ENCODE measurements at regions of chr20 and their contacts with region 1.

Region 1: DNA sequence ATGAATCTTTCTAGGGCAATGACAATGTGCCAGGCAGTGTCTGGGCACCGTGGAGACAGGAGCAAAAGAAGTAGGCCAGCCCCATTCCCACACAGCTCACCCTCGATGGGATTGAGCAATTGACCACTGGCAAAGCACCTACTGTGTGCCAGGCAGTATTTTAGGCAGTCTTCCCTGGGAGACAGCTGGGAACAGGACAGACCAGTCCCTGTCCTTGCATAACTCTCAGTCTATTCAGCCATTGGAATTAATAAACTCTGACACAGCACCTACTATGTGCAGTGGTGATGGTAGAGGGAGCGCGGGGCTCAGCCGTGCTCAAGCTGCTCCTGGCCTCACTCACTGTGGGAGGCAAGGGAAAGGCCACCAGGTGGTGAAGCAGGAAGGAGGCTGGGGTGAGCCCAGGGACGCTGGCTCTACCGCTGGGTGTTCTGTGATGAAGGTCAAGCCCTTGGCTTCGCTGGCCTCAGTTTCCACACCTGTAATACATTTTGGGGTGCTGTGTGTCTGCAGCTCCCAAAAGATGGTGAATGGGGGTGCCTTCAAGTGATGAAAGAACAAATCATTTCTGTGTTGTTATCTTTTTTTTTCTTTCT is 122.3 kb upstream of the PMEPA1 start:
- DNase-seq: no peak
- ATAC-seq: no peak
- H3K4me3 ChIP-seq: no peak overlapping the region
- H3K27ac ChIP-seq: no peak overlapping the region
- H3K4me1 ChIP-seq: no peaks in the 10 kb centered on the region
- H3K27me3 ChIP-seq: no peaks in the 10 kb centered on the region
- CTCF ChIP-seq: no peak

Region 2: GRCh38 chr20:57818418-57819181 is 13.5 kb before region 1 on chr20:
- CTCF ChIA-PET with region 1: interaction called, 10 read pairs
- POLR2A ChIA-PET with region 1: no interaction called
- in situ Hi-C with region 1: no loop called
- intact Hi-C with region 1: no loop called
- DNase-seq: no peak
- ATAC-seq: no peak
- H3K4me3 ChIP-seq: no peak overlapping the region
- H3K27ac ChIP-seq: no peak overlapping the region
- H3K4me1 ChIP-seq: no peaks in the 10 kb centered on the region
- H3K27me3 ChIP-seq: no peaks in the 10 kb centered on the region
- CTCF ChIP-seq: no peak